ENCODE measurements at regions of chr3 and their contacts with region 1.

Region 1: DNA sequence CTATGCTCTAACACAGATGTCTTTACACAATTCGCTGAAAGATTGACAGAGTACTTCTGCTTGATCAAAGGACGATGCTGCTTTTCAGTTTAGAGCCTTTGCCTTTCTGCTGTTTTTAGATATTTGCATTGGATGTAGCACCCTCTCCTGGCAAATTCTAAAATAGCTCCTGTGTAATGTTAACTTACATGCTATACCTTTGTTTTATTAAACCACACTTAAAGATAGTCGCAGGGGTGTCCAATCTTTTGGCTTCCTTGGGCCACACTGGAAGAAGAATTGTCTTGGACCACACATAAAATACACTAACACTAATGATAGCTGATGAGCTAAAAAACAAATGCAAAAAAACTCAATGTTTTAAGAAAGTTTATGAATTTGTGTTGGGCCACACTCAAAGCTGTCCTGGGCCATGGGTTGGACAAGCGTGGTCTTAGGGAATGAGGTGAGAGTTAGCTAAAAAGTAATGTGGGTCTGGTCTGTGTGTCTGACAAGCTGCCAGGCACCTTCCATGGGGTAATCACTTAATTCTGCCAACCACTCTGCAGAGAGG is 62.9 kb downstream of the ATG7 start:
- DNase-seq: peak in 1 of 2 experiments; percentile 52
- H3K4me3 ChIP-seq: no peak overlapping the region
- H3K4me3 Mint-ChIP-seq: no peak overlapping the region
- H3K27ac Mint-ChIP-seq: no peak overlapping the region
- H3K4me1 ChIP-seq: no peaks in the 10 kb centered on the region
- H3K4me1 Mint-ChIP-seq: no peaks in the 10 kb centered on the region
- H3K27me3 ChIP-seq: no peaks in the 10 kb centered on the region
- H3K27me3 Mint-ChIP-seq: no peaks in the 10 kb centered on the region
- CTCF ChIP-seq: peak; percentile 52 to 73

Region 2: DNA sequence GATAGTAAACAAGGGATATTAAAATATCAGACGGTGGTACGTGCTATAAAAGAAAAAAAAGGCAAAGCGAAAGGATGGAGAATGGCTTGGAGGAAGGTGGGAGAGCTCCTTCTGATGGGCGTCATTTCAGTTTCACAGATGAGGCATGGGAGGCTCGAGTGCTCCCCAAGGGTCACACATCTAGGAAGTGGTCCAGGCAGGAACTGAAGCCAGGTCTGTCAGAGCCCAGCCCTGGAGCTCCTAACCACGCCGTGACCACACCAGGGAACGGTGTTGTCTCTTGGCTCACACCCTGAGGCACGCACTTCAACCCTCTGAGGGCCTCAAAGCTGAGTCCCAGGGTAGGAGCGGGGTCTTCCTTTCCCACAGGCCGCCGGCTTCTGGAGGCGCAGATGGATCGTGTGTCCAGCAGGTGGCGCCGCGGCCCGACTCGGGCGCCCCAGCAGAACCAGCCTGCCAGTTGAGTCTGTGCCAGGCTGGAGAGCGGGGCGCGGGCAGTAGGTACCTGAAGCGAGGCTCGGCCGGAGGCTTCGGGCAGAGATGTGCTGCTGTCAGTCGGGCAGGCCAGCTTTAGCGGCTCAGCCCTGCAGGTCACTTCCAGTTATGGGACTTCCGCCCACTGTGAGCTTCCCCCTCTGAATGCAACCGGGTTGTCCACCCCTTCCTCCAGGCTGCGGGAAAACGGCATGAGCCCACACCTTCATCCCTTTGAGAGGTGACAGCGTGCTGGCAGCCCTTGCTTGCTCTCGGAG is 274.5 kb before region 1 on chr3:
- CTCF ChIA-PET with region 1: no interaction called
- POLR2A ChIA-PET with region 1: no interaction called
- intact Hi-C with region 1: loop called (anchors 10 kb)
- DNase-seq: peak; percentile 41 to 52
- H3K4me3 ChIP-seq: no peak overlapping the region
- H3K4me3 Mint-ChIP-seq: no peak overlapping the region
- H3K27ac Mint-ChIP-seq: no peak overlapping the region
- H3K4me1 ChIP-seq: no peaks in the 10 kb centered on the region
- H3K4me1 Mint-ChIP-seq: no peaks in the 10 kb centered on the region
- H3K27me3 ChIP-seq: no peaks in the 10 kb centered on the region; the same call in 1 of the 2 replicates
- H3K27me3 Mint-ChIP-seq: peaks cover 15% of the 10 kb centered on the region
- CTCF ChIP-seq: peak; percentile 53 to 74

Region 3: GRCh38 chr3:11155341-11156025 is 179.6 kb before region 1 on chr3:
- CTCF ChIA-PET with region 1: no interaction called
- POLR2A ChIA-PET with region 1: no interaction called
- intact Hi-C with region 1: loop called (anchors 1 kb)
- DNase-seq: peak; percentile 65
- H3K4me3 ChIP-seq: no peak overlapping the region
- H3K4me3 Mint-ChIP-seq: peak overlapping the region; percentile 27
- H3K27ac Mint-ChIP-seq: no peak overlapping the region
- H3K4me1 ChIP-seq: no peaks in the 10 kb centered on the region
- H3K4me1 Mint-ChIP-seq: no peaks in the 10 kb centered on the region
- H3K27me3 ChIP-seq: peaks cover 4% of the 10 kb centered on the region; the same call in 1 of the 2 replicates
- H3K27me3 Mint-ChIP-seq: peaks cover 14% of the 10 kb centered on the region
- CTCF ChIP-seq: peak; percentile 37 to 71

Region 4: GRCh38 chr3:11236595-11237461 is 98.3 kb before region 1 on chr3:
- CTCF ChIA-PET with region 1: interaction called, 18 read pairs
- POLR2A ChIA-PET with region 1: no interaction called
- intact Hi-C with region 1: loop called (anchors 1 kb)
- DNase-seq: peak; percentile 85 to 91
- H3K4me3 ChIP-seq: no peak overlapping the region
- H3K4me3 Mint-ChIP-seq: no peak overlapping the region
- H3K27ac Mint-ChIP-seq: no peak overlapping the region
- H3K4me1 ChIP-seq: no peaks in the 10 kb centered on the region
- H3K4me1 Mint-ChIP-seq: peaks cover 4% of the 10 kb centered on the region
- H3K27me3 ChIP-seq: no peaks in the 10 kb centered on the region
- H3K27me3 Mint-ChIP-seq: peaks cover 2% of the 10 kb centered on the region
- CTCF ChIP-seq: peak; percentile 85 to 91